Calu3 (cell line): ENCODE measurements at regions of chr10 and their contacts with region 1.

Region 1: DNA sequence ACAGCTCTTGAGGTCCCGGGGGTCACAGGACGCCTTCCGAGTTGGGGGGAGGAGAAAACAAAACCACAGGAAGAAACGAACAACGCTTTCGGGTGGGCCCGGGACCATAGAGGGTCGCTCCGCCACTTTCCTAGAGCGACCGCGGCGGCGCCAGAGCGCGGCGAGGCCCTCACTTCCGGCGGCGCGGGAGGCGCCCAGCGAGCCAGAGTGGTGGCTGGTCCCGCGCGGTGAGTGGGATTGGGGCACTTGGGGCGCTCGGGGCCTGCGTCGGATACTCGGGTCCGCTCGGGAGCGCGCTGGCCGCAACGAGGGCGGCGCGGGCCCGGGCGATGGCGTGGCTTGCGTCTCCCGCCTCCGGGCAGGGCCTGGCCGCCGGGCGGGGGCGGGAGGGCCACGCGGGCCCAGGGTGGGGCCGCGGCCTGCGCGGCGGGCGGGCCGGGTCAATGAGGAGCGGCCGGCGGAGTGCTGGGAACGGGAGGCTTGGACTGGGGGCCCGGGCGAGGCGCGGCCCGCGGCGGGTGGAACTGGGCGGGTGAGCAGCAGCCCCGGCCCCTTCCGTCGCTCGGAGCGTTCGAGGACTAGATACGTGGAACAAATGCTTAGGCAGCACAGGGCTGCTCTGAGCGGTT is at the start of gene ZNF22:
- DNase-seq: peak; percentile 57
- H3K4me3 Mint-ChIP-seq: peak within 1 kb of the TSS; percentile 71
- H3K27ac Mint-ChIP-seq: peak within 1 kb of the TSS; percentile 84
- H3K4me1 Mint-ChIP-seq: peaks cover 13% of the 10 kb centered on the region
- H3K27me3 Mint-ChIP-seq: peaks cover 13% of the 10 kb centered on the region
- CTCF ChIP-seq: no peak
- total RNA-seq, gene ZNF22: 10.8 and 11.9 TPM in 2 replicates

Region 2: GRCh38 chr10:44981172-44982113 is 19.4 kb before region 1 on chr10:
- CTCF ChIA-PET with region 1: interaction called, 9 read pairs
- intact Hi-C with region 1: loop called (anchors 1 kb)
- DNase-seq: peak; percentile 75
- H3K4me3 Mint-ChIP-seq: peak overlapping the region; percentile 65
- H3K27ac Mint-ChIP-seq: peak overlapping the region; percentile 100
- H3K4me1 Mint-ChIP-seq: peaks cover 69% of the 10 kb centered on the region
- H3K27me3 Mint-ChIP-seq: no peaks in the 10 kb centered on the region
- CTCF ChIP-seq: no peak

Region 3: DNA sequence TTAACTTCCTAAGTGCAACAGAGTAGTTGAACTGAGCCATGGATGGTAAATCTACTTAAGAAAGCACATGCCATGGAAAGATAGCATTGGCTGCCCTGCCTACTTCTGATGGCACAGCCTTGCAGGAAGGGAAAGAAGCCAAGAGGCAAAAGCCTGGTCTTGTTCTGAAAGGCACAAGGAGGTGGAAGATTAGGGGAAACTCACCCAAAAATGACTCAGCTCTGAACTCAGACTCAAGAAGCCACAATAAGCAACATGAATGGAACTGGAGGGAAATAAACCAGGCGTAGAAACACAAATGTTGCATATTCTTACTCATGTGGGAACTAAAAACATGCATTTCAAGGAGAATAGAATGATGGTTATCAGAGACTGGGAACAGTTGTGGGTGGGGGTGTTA is 352.3 kb after region 1 on chr10:
- CTCF ChIA-PET with region 1: no interaction called
- intact Hi-C with region 1: no loop called
- DNase-seq: no peak
- H3K4me3 Mint-ChIP-seq: no peak overlapping the region
- H3K27ac Mint-ChIP-seq: no peak overlapping the region
- H3K4me1 Mint-ChIP-seq: no peaks in the 10 kb centered on the region
- H3K27me3 Mint-ChIP-seq: peaks cover 45% of the 10 kb centered on the region
- CTCF ChIP-seq: no peak

Region 4: DNA sequence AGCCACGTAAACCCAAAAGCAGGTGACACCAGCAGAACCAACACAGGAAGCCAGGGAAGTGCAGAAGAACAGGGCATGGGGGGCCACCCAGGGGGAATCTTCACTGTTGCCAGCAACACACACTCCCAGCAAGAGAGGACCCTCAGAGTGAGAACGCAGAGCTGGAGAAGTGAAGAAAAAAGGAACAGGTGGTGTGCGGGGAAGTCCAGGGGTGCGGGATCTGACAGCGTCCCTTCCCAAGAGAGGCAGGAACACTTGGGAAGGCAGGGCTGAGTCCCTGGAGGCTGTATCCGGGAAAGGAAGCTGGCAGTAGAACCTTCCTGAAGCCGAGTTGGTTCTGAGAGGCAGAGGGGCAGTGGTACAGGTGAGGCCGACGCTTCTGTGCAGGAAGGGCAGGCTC is 818.7 kb after region 1 on chr10:
- CTCF ChIA-PET with region 1: no interaction called
- intact Hi-C with region 1: no loop called
- DNase-seq: no peak
- H3K4me3 Mint-ChIP-seq: no peak overlapping the region
- H3K27ac Mint-ChIP-seq: no peak overlapping the region
- H3K4me1 Mint-ChIP-seq: no peaks in the 10 kb centered on the region
- H3K27me3 Mint-ChIP-seq: peaks cover 21% of the 10 kb centered on the region
- CTCF ChIP-seq: no peak